ENCODE measurements at regions of chr7 and their contacts with region 1.

Region 1: DNA sequence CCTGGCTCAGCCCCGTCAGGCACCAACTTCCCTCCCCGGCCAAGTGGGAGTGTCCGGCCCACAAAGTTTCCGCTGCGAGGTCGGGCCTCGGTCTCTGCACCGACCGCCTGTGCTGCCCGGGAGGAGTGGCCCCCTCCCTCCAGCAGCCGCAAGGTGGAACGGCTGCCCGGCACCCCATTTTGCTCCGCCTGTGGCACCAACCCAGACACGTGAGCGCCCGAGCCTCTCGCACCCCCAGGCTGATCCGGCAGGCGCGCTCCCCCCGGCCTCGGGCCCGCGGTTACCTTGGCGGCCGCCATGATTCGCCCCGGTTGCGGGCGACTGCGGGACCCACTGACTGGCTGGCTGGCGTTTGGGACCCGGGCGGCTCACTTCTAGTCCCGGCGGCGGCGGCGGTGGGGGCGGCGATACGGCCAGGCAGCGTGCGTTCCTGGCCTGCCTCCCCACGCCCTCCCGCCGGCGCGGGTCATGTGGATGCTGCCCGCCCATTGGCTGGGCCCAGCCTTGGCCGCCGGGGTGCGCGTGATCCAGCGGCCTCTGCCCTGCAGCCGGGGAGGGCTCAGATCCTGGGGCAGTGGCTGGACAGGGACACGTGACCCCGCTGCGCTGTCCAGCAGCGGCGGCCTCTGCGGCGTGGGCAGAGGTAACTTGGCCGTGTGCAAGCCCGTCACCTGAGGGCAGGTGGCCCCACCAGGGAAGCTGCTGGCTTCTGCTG is at the start of gene SLC25A13:
- DNase-seq: peak; percentile 62
- H3K4me3 Mint-ChIP-seq: peak within 1 kb of the TSS; percentile 95
- H3K27ac Mint-ChIP-seq: peak within 1 kb of the TSS; percentile 98
- H3K4me1 Mint-ChIP-seq: peaks cover 41% of the 10 kb centered on the region
- H3K27me3 Mint-ChIP-seq: no peaks in the 10 kb centered on the region
- total RNA-seq, gene SLC25A13: 18.5 and 21.0 TPM in 2 replicates

Region 2: GRCh38 chr7:95511716-95512260 is 810.0 kb before region 1 on chr7:
- intact Hi-C with region 1: loop called (anchors 10 kb)
- DNase-seq: peak; percentile 31
- H3K4me3 Mint-ChIP-seq: no peak overlapping the region
- H3K27ac Mint-ChIP-seq: no peak overlapping the region
- H3K4me1 Mint-ChIP-seq: no peaks in the 10 kb centered on the region
- H3K27me3 Mint-ChIP-seq: peaks cover 8% of the 10 kb centered on the region

Region 3: GRCh38 chr7:96303686-96304443 is 17.9 kb before region 1 on chr7:
- intact Hi-C with region 1: loop called (anchors 1 kb)
- DNase-seq: no peak
- H3K4me3 Mint-ChIP-seq: peak overlapping the region; percentile 0
- H3K27ac Mint-ChIP-seq: peak overlapping the region; percentile 62
- H3K4me1 Mint-ChIP-seq: peaks cover 46% of the 10 kb centered on the region
- H3K27me3 Mint-ChIP-seq: no peaks in the 10 kb centered on the region

Region 4: GRCh38 chr7:96685353-96685752 is 363.5 kb after region 1 on chr7:
- intact Hi-C with region 1: no loop called
- DNase-seq: no peak
- H3K4me3 Mint-ChIP-seq: peak overlapping the region; percentile 15
- H3K27ac Mint-ChIP-seq: peak overlapping the region; percentile 58
- H3K4me1 Mint-ChIP-seq: peaks cover 37% of the 10 kb centered on the region
- H3K27me3 Mint-ChIP-seq: no peaks in the 10 kb centered on the region

Region 5: GRCh38 chr7:96837593-96837992 is 515.8 kb after region 1 on chr7:
- intact Hi-C with region 1: loop called (anchors 1 kb)
- DNase-seq: peak; percentile 17
- H3K4me3 Mint-ChIP-seq: peak overlapping the region; percentile 57
- H3K27ac Mint-ChIP-seq: peak overlapping the region; percentile 74
- H3K4me1 Mint-ChIP-seq: peaks cover 15% of the 10 kb centered on the region
- H3K27me3 Mint-ChIP-seq: peaks cover 31% of the 10 kb centered on the region

Region 6: DNA sequence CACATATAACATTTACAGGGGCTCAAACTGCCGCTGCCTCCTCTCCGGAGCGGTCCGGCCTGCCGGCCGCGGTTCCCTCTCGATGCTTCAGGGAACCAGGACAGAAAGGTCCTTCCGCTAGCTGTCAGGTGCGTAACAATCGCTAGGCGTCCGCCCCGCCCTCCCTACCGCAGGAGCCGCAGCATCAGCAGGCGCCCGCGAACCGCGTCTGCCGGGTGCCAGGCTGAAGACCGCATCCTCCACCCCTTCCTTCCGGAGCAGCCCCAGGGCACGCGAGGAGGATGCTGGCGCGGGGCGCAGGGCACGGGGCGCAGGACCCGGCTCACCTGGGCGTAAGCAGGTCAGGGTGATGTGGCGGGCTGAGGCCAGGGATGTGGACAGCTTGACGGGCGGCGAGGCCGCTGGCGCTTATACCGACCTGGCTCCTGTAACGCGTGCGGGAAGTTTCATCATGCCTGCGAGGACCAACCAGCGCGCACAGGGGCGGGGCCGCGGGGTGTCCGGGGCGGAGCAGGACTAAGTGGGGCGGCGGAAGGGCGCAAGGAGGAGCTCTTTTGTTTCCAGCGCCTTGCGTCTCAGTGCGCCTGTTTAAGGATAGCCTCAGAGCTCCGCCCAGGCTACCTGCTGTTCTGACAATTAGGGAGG is 1550.3 kb after region 1 on chr7 and contains the start of gene ASNS:
- intact Hi-C with region 1: loop called (anchors 1 kb)
- DNase-seq: peak; percentile 86
- H3K4me3 Mint-ChIP-seq: peak within 1 kb of the TSS; percentile 90
- H3K27ac Mint-ChIP-seq: peak within 1 kb of the TSS; percentile 86
- H3K4me1 Mint-ChIP-seq: peaks cover 20% of the 10 kb centered on the region
- H3K27me3 Mint-ChIP-seq: no peaks in the 10 kb centered on the region
- total RNA-seq, gene ASNS: 71.1 and 79.6 TPM in 2 replicates

Region 7: DNA sequence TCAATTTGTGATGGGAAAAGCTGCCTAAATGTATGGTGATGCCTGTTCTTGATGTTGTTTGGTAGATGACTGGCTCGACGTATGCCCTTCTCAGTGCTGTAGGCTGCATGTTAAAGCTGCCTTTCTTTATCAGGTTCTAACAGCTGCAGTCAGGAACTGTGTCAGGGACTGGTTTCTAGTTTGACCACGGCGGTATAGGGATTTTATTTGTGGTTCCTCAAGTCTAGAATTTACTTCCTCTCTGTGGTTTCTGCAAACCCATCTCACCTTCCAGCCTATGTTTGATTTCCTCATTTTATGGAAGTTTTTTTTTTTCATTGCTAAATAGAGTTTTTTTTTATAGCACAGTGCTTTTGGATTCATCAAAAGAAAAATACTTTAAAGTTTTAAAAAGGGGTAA is 1811.4 kb after region 1 on chr7:
- intact Hi-C with region 1: loop called (anchors 10 kb)
- DNase-seq: peak; percentile 13
- H3K4me3 Mint-ChIP-seq: peak overlapping the region; percentile 61
- H3K27ac Mint-ChIP-seq: peak overlapping the region; percentile 37
- H3K4me1 Mint-ChIP-seq: peaks cover 39% of the 10 kb centered on the region
- H3K27me3 Mint-ChIP-seq: peaks cover 2% of the 10 kb centered on the region